Activated T-helper 1 cell treated with anti-CD3 and anti-CD28 coated beads, Interleukin-12 subunit alpha, Interleukin-12 subunit beta, Interleukin-2, Interleukin-4 antibody, amounts not matched to agents 30 ng/mL and 10 ng/mL and 1 ng/mL, durations not matched to agents 14 hours and 24 hours and 36 hours (primary cell): ENCODE measurements at regions of chr14 and their contacts with region 1.

Region 1: DNA sequence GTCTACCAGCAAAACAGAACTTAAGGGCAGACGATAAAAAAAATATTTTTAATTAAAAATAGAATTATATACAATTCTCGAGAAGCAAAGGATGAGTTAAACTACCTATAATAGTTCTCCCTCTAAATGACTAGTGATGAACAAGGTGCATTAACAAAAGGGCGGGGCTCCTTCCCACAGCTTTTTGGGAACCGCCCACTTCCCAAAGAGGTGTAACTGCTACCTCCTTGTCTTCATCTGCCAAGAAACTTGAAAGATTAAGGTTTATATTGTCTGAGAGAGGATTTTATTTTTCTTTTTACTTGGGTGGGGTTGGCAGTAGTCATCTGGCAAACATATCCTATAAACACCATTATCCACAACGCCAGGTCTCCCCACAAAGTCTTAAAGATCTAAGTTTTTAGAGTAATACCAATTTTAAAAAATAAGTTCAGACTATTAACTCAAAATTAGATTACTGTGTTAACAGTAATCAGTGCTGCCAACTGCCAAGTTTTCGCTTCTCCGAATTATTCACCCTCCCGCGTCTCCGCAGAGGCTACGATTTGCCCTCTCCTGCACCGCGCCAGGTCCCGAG is 931 bp downstream of the RALGAPA1 start:
- DNase-seq: no peak
- H3K4me3 Mint-ChIP-seq: peak overlapping the region; percentile 100
- H3K27ac Mint-ChIP-seq: peak overlapping the region; percentile 97
- H3K4me1 Mint-ChIP-seq: peaks cover 29% of the 10 kb centered on the region
- H3K27me3 Mint-ChIP-seq: peaks cover 3% of the 10 kb centered on the region

Region 2: GRCh38 chr14:35492569-35493014 is 315.6 kb before region 1 on chr14:
- intact Hi-C with region 1: no loop called
- DNase-seq: no peak
- H3K4me3 Mint-ChIP-seq: no peak overlapping the region
- H3K27ac Mint-ChIP-seq: no peak overlapping the region
- H3K4me1 Mint-ChIP-seq: no peaks in the 10 kb centered on the region
- H3K27me3 Mint-ChIP-seq: no peaks in the 10 kb centered on the region

Region 3: GRCh38 chr14:35741345-35742031 is 66.7 kb before region 1 on chr14:
- intact Hi-C with region 1: loop called (anchors 1 kb)
- DNase-seq: no peak
- H3K4me3 Mint-ChIP-seq: no peak overlapping the region
- H3K27ac Mint-ChIP-seq: peak overlapping the region; percentile 47
- H3K4me1 Mint-ChIP-seq: peaks cover 23% of the 10 kb centered on the region
- H3K27me3 Mint-ChIP-seq: no peaks in the 10 kb centered on the region